ENCODE measurements at regions of chr14 and their contacts with region 1.

Region 1: DNA sequence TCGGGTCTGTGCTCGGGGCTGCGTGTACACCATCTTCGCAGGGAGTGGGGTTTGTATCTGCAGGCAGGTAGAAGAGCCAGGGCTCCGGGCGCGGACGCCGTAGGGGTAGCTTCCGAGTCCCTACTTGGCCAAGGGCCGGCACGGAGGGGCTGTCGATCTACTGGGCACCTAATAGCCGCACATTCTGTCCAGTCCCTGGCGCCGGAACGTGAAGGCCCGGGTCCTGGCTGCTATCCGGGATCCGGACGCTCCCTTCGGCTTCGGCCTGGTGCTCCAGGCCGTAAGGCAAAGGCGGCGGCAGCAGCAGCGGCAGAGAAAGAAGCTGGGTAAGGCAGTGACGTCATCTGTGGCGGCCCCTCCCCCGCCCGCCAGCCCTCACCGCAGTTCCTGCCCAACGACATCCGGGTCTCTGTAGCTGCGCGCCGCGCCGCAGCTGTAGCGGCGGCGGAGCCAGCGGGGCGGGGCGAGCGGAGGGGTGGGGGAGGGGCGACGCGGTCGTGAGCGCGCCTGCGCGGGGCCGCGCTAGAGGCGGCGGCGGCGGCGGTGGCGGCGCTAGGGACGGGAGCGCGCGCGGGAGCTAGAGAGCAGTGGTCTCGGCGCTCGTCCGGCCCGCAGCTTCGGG is at the start of gene PPM1A:
- DNase-seq: peak; percentile 94 to 99 (median 96)
- ATAC-seq: peak; percentile 71
- H3K4me3 ChIP-seq: peak within 1 kb of the TSS; percentile 92
- H3K4me3 Mint-ChIP-seq: peak within 1 kb of the TSS; percentile 96
- H3K27ac ChIP-seq: peak within 1 kb of the TSS; percentile 100
- H3K27ac Mint-ChIP-seq: peak within 1 kb of the TSS; percentile 97
- H3K4me1 ChIP-seq: peaks cover 23% of the 10 kb centered on the region
- H3K4me1 Mint-ChIP-seq: peaks cover 53% of the 10 kb centered on the region
- H3K27me3 ChIP-seq: no peaks in the 10 kb centered on the region
- H3K27me3 Mint-ChIP-seq: no peaks in the 10 kb centered on the region
- CTCF ChIP-seq: no peak
- total RNA-seq, gene PPM1A: 96.9 to 97.2 TPM

Region 2: GRCh38 chr14:58297762-58298476 is 1950.9 kb before region 1 on chr14:
- CTCF ChIA-PET with region 1: no interaction called
- POLR2A ChIA-PET with region 1: interaction called, 16 read pairs
- intact Hi-C with region 1: no loop called
- DNase-seq: peak; percentile 94 to 100 (median 98)
- ATAC-seq: peak; percentile 83
- H3K4me3 ChIP-seq: peak overlapping the region; percentile 85
- H3K4me3 Mint-ChIP-seq: no peak overlapping the region
- H3K27ac ChIP-seq: peak overlapping the region; percentile 95 to 98
- H3K27ac Mint-ChIP-seq: no peak overlapping the region
- H3K4me1 ChIP-seq: peaks cover 30% of the 10 kb centered on the region
- H3K4me1 Mint-ChIP-seq: peaks cover 32% of the 10 kb centered on the region
- H3K27me3 ChIP-seq: no peaks in the 10 kb centered on the region
- H3K27me3 Mint-ChIP-seq: no peaks in the 10 kb centered on the region
- CTCF ChIP-seq: no peak

Region 3: GRCh38 chr14:59483900-59484638 is 764.7 kb before region 1 on chr14 and contains the starts of genes JKAMP and L3HYPDH:
- CTCF ChIA-PET with region 1: no interaction called
- POLR2A ChIA-PET with region 1: interaction called, 21 read pairs
- intact Hi-C with region 1: loop called in 1 of 2 experiments (anchors 10 kb)
- DNase-seq: peak; percentile 95 to 99 (median 97)
- ATAC-seq: peak; percentile 95
- H3K4me3 ChIP-seq: peak within 1 kb of the TSS; percentile 99
- H3K4me3 Mint-ChIP-seq: peak within 1 kb of the TSS; percentile 99
- H3K27ac ChIP-seq: peak within 1 kb of the TSS; percentile 62 to 63
- H3K27ac Mint-ChIP-seq: peak within 1 kb of the TSS; percentile 96
- H3K4me1 ChIP-seq: peaks cover 39% of the 10 kb centered on the region
- H3K4me1 Mint-ChIP-seq: peaks cover 73% of the 10 kb centered on the region
- H3K27me3 ChIP-seq: no peaks in the 10 kb centered on the region
- H3K27me3 Mint-ChIP-seq: no peaks in the 10 kb centered on the region
- CTCF ChIP-seq: peak; percentile 28
- total RNA-seq, gene JKAMP: 9.4 to 9.8 TPM
- total RNA-seq, gene L3HYPDH: 10.6 to 11.1 TPM

Region 4: DNA sequence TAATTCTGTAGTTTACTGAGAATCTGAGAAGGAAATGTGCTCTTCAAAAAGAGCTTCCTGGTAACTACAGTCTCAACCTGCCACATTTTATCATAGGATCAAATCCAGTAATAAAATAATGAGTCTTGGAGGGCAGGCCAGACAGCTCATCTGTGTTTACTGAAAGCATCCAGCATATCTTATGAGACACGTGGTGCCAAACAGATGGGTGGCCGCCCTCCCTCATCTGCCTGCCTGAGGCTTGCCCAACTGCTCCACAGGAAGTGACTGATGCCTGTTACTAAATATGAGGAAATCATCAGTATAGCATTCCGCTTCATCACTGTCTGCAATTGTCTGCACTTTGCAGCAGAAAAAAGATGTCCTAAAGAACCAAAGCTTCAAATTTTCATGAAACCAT is 97.1 kb before region 1 on chr14:
- CTCF ChIA-PET with region 1: interaction called, 4 read pairs
- POLR2A ChIA-PET with region 1: interaction called, 19 read pairs
- intact Hi-C with region 1: no loop called
- DNase-seq: peak; percentile 44 to 87 (median 68)
- ATAC-seq: peak; percentile 99
- H3K4me3 ChIP-seq: no peak overlapping the region
- H3K4me3 Mint-ChIP-seq: no peak overlapping the region
- H3K27ac ChIP-seq: peak overlapping the region; percentile 32 to 73
- H3K27ac Mint-ChIP-seq: peak overlapping the region; percentile 87
- H3K4me1 ChIP-seq: peaks cover 29% of the 10 kb centered on the region
- H3K4me1 Mint-ChIP-seq: peaks cover 52% of the 10 kb centered on the region
- H3K27me3 ChIP-seq: no peaks in the 10 kb centered on the region
- H3K27me3 Mint-ChIP-seq: no peaks in the 10 kb centered on the region
- CTCF ChIP-seq: no peak

Region 5: DNA sequence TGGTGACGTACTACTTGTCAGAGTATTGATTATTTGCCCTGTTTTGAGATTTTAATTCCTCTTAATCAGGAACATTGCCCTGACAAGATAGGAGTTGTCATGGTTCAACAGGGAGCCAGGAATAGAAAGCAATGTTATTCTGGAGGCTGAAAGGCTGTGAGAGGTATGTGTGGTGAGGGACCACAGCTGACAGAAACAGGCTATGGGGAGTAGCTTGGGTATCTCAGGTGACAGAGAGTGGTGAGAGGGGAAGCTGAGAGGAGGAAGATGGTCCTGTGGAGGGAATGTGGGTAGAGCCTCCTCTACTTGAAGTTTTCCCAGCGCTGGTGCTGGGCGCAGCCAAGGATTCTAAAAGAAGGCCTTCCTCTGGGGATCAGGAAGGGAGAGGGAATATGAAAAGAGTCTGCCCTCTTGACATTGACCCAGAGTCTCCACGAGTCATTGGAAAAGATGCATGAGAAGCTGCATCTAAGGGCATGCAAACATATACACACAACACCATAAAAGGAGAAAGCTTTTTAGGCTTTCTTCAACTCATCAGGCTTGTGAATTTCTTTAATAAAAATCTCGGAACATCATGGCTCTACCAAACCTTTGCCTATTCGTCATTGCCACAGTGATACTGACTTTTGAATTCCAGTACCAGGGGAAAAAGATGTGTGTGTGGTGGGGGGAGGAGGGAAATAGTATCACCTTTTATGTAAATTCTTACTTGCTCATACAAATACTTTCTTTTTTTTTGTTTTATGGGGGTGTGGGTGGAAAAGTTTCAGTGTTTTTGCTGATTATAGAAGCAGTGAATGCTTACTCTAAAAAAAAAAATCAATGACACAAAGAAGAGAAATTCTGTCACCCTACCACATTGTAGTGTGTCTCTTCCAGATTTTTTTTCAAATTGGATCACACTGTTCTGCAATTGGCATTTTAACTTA is 43.7 kb before region 1 on chr14:
- CTCF ChIA-PET with region 1: no interaction called
- POLR2A ChIA-PET with region 1: interaction called, 3 read pairs
- intact Hi-C with region 1: loop called in 1 of 2 experiments (anchors 5 kb)
- DNase-seq: no peak
- ATAC-seq: no peak
- H3K4me3 ChIP-seq: no peak overlapping the region
- H3K4me3 Mint-ChIP-seq: no peak overlapping the region
- H3K27ac ChIP-seq: no peak overlapping the region
- H3K27ac Mint-ChIP-seq: no peak overlapping the region
- H3K4me1 ChIP-seq: no peaks in the 10 kb centered on the region
- H3K4me1 Mint-ChIP-seq: no peaks in the 10 kb centered on the region
- H3K27me3 ChIP-seq: peaks cover 0 to 6% of the 10 kb centered on the region in 2 experiments
- H3K27me3 Mint-ChIP-seq: peaks cover 32% of the 10 kb centered on the region
- CTCF ChIP-seq: no peak

Region 6: DNA sequence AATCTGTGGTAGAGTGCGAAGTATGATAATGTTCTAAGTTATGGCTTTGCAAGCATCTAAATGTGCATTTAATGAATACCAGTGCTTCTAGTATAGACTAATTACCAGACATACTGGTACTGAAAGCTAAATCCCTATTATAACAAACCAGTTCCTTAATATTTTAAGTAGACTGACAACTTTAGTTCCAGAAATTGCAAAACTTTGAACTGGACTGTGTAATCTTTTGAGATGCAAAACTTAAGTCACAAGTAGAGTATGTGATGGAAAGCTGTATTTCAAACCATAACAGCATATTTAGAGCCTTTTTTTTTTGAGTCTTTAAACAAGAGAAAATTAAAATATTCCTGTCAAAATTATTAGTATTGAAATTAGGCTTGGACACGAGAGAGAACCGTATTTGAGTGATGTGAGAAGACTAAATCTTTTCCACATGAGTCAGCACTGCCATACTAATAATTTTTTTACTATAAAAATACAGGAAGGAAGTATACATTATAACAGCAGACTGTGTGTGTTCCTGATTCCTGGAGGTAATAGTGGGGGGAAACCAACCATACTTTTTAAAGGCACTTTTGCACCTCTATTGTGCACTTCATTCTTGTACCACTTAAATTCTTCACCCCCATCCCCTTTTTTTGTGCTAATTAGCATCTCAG is 45.7 kb after region 1 on chr14:
- CTCF ChIA-PET with region 1: no interaction called
- POLR2A ChIA-PET with region 1: interaction called, 3 read pairs
- intact Hi-C with region 1: loop called in 1 of 2 experiments (anchors 2 kb)
- DNase-seq: no peak
- ATAC-seq: no peak
- H3K4me3 ChIP-seq: no peak overlapping the region
- H3K4me3 Mint-ChIP-seq: no peak overlapping the region
- H3K27ac ChIP-seq: no peak overlapping the region
- H3K27ac Mint-ChIP-seq: no peak overlapping the region
- H3K4me1 ChIP-seq: no peaks in the 10 kb centered on the region
- H3K4me1 Mint-ChIP-seq: no peaks in the 10 kb centered on the region
- H3K27me3 ChIP-seq: no peaks in the 10 kb centered on the region
- H3K27me3 Mint-ChIP-seq: no peaks in the 10 kb centered on the region
- CTCF ChIP-seq: no peak

Region 7: GRCh38 chr14:61280526-61281185 is 1031.8 kb after region 1 on chr14:
- CTCF ChIA-PET with region 1: interaction called, 3 read pairs
- POLR2A ChIA-PET with region 1: interaction called, 17 read pairs
- intact Hi-C with region 1: no loop called
- DNase-seq: peak; percentile 53 to 91 (median 80)
- ATAC-seq: peak; percentile 84
- H3K4me3 ChIP-seq: peak overlapping the region; percentile 63
- H3K4me3 Mint-ChIP-seq: peak overlapping the region; percentile 96
- H3K27ac ChIP-seq: peak overlapping the region in 1 of 2 donors; percentile 60
- H3K27ac Mint-ChIP-seq: peak overlapping the region; percentile 94
- H3K4me1 ChIP-seq: peaks cover 24% of the 10 kb centered on the region
- H3K4me1 Mint-ChIP-seq: peaks cover 28% of the 10 kb centered on the region
- H3K27me3 ChIP-seq: no peaks in the 10 kb centered on the region
- H3K27me3 Mint-ChIP-seq: no peaks in the 10 kb centered on the region
- CTCF ChIP-seq: peak; percentile 74